Activated CD4-positive, alpha-beta T cell treated with anti-CD3 and anti-CD28 coated beads for 36 hours (primary cell): ENCODE measurements at regions of chr3 and their contacts with region 1.

Region 1: GRCh38 chr3:178275793-178276192 is 260.4 kb upstream of the KCNMB2 start:
- DNase-seq: no peak
- ATAC-seq: no peak
- H3K4me3 Mint-ChIP-seq: no peak overlapping the region
- H3K27ac Mint-ChIP-seq: no peak overlapping the region
- H3K4me1 Mint-ChIP-seq: no peaks in the 10 kb centered on the region
- H3K27me3 Mint-ChIP-seq: no peaks in the 10 kb centered on the region

Region 2: GRCh38 chr3:177410730-177411129 is 865.1 kb before region 1 on chr3:
- CTCF ChIA-PET with region 1: no interaction called
- POLR2A ChIA-PET with region 1: no interaction called
- intact Hi-C with region 1: no loop called
- DNase-seq: no peak
- ATAC-seq: no peak
- H3K4me3 Mint-ChIP-seq: no peak overlapping the region
- H3K27ac Mint-ChIP-seq: no peak overlapping the region
- H3K4me1 Mint-ChIP-seq: peaks cover 10% of the 10 kb centered on the region
- H3K27me3 Mint-ChIP-seq: no peaks in the 10 kb centered on the region

Region 3: DNA sequence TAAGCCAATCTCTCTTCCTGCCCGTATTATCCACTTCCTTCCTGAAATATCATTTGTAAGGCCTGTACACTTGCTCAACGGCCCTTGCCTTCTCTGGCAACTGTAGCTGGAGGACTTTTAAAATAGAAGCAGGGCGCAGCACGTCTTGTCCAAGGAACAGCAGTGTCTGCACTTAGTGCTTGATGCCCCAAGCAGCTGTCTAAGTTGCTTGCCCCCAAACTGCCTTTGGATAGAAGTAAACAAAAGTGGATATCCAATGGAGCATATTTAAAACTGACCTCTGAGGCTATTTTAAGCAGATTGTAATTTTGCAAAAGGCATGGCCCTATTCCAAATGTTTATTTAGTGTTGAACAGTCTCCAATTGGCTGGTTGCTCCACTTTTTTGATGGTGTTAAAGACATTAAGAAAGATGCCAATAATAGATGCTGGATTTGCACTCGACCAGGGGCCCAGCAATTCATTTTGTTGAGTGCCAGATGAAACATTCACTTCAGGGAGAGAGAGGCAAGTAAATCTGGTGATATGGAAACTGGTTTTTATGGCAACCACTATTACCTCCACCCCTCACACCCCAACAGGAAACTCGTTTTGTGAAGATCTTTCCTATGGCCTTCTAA is 551.7 kb before region 1 on chr3:
- CTCF ChIA-PET with region 1: no interaction called
- POLR2A ChIA-PET with region 1: interaction called, 10 read pairs
- intact Hi-C with region 1: no loop called
- DNase-seq: no peak
- ATAC-seq: no peak
- H3K4me3 Mint-ChIP-seq: no peak overlapping the region
- H3K27ac Mint-ChIP-seq: no peak overlapping the region
- H3K4me1 Mint-ChIP-seq: peaks cover 11% of the 10 kb centered on the region
- H3K27me3 Mint-ChIP-seq: no peaks in the 10 kb centered on the region

Region 4: DNA sequence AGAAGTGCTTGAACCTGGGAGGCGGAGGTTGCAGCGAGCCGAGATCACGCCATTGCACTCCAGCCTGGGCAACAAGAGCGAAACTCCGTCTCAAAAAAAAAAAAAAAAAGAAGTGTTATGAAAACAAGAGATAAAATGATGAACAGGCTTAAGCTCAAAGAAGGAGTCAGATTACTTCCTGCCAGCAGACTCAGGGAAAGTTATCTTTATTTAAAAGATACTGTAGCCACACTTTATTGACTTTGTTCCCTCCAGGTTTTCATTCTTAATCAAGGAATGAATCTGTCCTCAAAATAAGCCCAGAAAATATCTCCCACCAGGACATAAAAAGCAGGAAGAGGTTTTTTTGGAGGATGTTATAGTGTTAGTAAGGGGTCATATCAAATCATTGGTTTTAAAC is 83.9 kb after region 1 on chr3:
- CTCF ChIA-PET with region 1: no interaction called
- POLR2A ChIA-PET with region 1: no interaction called
- intact Hi-C with region 1: no loop called
- DNase-seq: no peak
- ATAC-seq: no peak
- H3K4me3 Mint-ChIP-seq: no peak overlapping the region
- H3K27ac Mint-ChIP-seq: no peak overlapping the region
- H3K4me1 Mint-ChIP-seq: no peaks in the 10 kb centered on the region
- H3K27me3 Mint-ChIP-seq: peaks cover 16% of the 10 kb centered on the region